ENCODE measurements at regions of chr3 and their contacts with region 1.

Region 1: GRCh38 chr3:60192297-60193114 is 1058.7 kb downstream of the FHIT start:
- DNase-seq: peak; percentile 70
- H3K4me3 Mint-ChIP-seq: peak overlapping the region; percentile 45
- H3K27ac Mint-ChIP-seq: peak overlapping the region; percentile 90
- H3K4me1 Mint-ChIP-seq: peaks cover 48% of the 10 kb centered on the region
- H3K27me3 Mint-ChIP-seq: no peaks in the 10 kb centered on the region

Region 2: DNA sequence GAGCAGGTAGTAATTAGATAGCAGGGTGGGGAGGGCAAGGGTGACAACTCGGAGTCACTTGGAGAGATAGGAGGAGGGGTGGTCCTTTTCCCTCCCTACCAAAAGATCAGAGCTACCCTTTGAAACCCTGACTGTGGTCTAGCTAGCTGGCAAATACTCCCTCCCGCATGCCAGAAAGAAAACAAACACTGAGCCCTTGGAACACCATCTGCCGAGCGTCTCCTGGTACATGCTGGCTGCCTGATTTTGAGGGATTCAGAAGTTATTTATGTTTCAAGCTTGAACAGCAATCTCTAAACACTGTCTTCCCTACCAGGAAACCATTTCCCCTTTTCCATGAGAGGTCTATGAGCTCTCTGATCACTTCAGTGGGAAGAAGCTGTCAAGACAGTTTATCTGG is 851.0 kb before region 1 on chr3:
- intact Hi-C with region 1: no loop called
- DNase-seq: no peak
- H3K4me3 Mint-ChIP-seq: no peak overlapping the region
- H3K27ac Mint-ChIP-seq: no peak overlapping the region
- H3K4me1 Mint-ChIP-seq: peaks cover 9% of the 10 kb centered on the region
- H3K27me3 Mint-ChIP-seq: no peaks in the 10 kb centered on the region

Region 3: DNA sequence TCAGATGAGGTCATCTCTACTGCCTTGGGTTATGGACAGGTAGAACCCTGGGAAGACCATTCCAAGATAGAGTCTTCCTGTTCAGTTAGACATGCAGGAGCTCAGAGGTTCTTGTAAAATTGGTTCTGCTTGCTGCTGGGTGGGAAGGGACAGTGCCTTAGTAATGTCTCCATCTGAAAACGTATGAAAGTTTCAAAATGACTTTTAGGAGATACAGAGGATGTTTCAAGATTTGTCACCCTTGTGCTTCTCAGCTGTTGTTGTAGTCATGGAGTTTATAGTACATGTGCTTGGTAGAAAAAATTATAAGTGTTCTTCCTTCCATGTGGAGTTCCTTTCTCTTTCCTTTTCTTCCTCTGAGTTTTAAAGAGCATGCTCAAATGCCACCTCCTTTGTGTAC is 257.5 kb before region 1 on chr3:
- intact Hi-C with region 1: loop called (anchors 2 kb)
- DNase-seq: peak; percentile 62
- H3K4me3 Mint-ChIP-seq: peak overlapping the region; percentile 58
- H3K27ac Mint-ChIP-seq: peak overlapping the region; percentile 88
- H3K4me1 Mint-ChIP-seq: peaks cover 28% of the 10 kb centered on the region
- H3K27me3 Mint-ChIP-seq: no peaks in the 10 kb centered on the region

Region 4: GRCh38 chr3:60053526-60054265 is 138.8 kb before region 1 on chr3:
- intact Hi-C with region 1: loop called (anchors 1 kb)
- DNase-seq: peak; percentile 72
- H3K4me3 Mint-ChIP-seq: peak overlapping the region; percentile 61
- H3K27ac Mint-ChIP-seq: peak overlapping the region; percentile 93
- H3K4me1 Mint-ChIP-seq: peaks cover 78% of the 10 kb centered on the region
- H3K27me3 Mint-ChIP-seq: no peaks in the 10 kb centered on the region

Region 5: DNA sequence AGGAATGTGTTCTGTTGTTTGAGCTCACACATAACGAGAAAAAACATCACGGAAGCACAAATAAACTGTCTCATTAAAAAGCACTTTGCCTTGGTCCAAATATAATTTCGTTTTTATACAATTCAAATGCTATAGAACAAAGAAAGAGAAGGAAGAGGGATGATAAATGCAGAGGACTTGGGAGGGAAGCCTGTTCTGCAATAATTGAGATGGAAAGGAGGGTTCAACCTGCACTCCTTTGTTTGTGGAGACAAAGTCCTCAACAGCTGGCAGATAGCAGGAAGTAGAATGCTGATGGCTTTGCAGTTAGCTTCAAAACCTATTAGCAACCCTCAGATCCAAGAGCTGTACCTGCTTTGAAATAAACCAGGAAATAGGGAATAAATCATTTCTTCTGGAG is 48.0 kb after region 1 on chr3:
- intact Hi-C with region 1: no loop called
- DNase-seq: no peak
- H3K4me3 Mint-ChIP-seq: no peak overlapping the region
- H3K27ac Mint-ChIP-seq: no peak overlapping the region
- H3K4me1 Mint-ChIP-seq: no peaks in the 10 kb centered on the region
- H3K27me3 Mint-ChIP-seq: no peaks in the 10 kb centered on the region

Region 6: DNA sequence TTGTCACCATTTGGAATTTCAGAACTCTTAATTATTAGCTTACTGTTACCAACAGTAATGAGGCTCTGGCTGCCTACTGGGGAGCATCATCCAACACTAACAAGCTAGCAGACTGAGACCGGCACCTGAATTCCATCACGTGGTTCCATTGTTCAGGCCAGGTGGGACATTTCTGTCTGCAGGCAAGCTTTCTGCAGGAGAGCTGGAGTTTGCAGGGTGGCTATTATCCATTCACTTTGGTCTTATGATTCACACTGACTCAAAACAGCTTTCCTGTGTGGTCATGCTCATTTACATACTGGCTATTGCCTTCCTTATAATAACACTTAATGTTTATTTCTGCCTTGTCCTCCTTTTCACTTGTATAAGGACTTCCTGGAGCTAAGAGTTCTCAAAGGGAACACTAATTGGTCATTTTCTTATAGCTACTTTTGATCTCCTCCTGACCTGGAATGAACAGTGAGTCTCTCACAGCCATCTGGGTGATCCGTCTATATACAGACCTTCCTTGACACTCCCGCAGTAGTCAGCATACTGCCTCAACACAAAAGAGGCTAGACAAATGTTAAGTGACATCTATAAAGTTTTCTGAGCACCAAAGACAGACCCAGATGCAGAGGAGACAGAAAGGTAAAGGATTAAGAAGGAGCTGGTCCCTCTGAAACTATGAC is 363.3 kb after region 1 on chr3:
- intact Hi-C with region 1: loop called (anchors 1 kb)
- DNase-seq: peak; percentile 56
- H3K4me3 Mint-ChIP-seq: no peak overlapping the region
- H3K27ac Mint-ChIP-seq: no peak overlapping the region
- H3K4me1 Mint-ChIP-seq: peaks cover 24% of the 10 kb centered on the region
- H3K27me3 Mint-ChIP-seq: no peaks in the 10 kb centered on the region

Measured in activated CD4-positive, alpha-beta T cell treated with anti-CD3 and anti-CD28 coated beads, Interleukin-2, amount 10 ng/mL, durations not matched to agents 24 days and 14 days (primary cell).